Activated CD4-positive, alpha-beta T cell treated with anti-CD3 and anti-CD28 coated beads for 36 hours (primary cell): ENCODE measurements at regions of chr4 and their contacts with region 1.

Region 1: DNA sequence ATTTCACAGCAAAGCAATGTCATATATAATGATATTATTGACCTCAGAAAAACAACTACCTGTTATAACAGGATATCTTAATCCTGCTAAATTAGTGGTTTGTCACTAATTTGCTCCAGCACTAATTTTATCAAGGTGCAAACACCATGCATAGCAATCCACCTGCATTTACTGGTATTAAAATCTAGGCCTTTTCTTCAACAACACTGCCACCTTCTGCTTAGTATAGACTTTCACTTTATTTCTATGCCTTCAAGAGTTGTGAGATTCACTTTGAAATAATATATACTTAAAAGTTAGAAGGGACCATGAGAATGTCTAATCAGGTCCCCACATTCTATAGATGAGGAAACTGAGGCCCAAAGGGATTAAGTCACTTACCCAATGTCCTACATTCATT is 82.1 kb upstream of the IQCM start:
- DNase-seq: no peak
- ATAC-seq: no peak
- H3K4me3 Mint-ChIP-seq: no peak overlapping the region
- H3K27ac Mint-ChIP-seq: no peak overlapping the region
- H3K4me1 Mint-ChIP-seq: no peaks in the 10 kb centered on the region
- H3K27me3 Mint-ChIP-seq: no peaks in the 10 kb centered on the region

Region 2: GRCh38 chr4:149370785-149371420 is 526.9 kb before region 1 on chr4:
- CTCF ChIA-PET with region 1: no interaction called
- POLR2A ChIA-PET with region 1: no interaction called
- intact Hi-C with region 1: loop called (anchors 2 to 5 kb)
- DNase-seq: no peak
- ATAC-seq: no peak
- H3K4me3 Mint-ChIP-seq: no peak overlapping the region
- H3K27ac Mint-ChIP-seq: no peak overlapping the region
- H3K4me1 Mint-ChIP-seq: no peaks in the 10 kb centered on the region
- H3K27me3 Mint-ChIP-seq: no peaks in the 10 kb centered on the region

Region 3: GRCh38 chr4:149961876-149962597 is 64.3 kb after region 1 on chr4:
- CTCF ChIA-PET with region 1: no interaction called
- POLR2A ChIA-PET with region 1: no interaction called
- intact Hi-C with region 1: loop called in 1 of 2 experiments (anchors 2 kb)
- DNase-seq: no peak
- ATAC-seq: no peak
- H3K4me3 Mint-ChIP-seq: no peak overlapping the region
- H3K27ac Mint-ChIP-seq: no peak overlapping the region
- H3K4me1 Mint-ChIP-seq: no peaks in the 10 kb centered on the region
- H3K27me3 Mint-ChIP-seq: peaks cover 8% of the 10 kb centered on the region